Activated T-helper 1 cell treated with anti-CD3 and anti-CD28 coated beads, Interleukin-12 subunit alpha, Interleukin-12 subunit beta, Interleukin-2, Interleukin-4 antibody, amounts not matched to agents 30 ng/mL and 10 ng/mL and 1 ng/mL, durations not matched to agents 14 hours and 24 hours and 36 hours (primary cell): ENCODE measurements at regions of chr2 and their contacts with region 1.

Region 1: DNA sequence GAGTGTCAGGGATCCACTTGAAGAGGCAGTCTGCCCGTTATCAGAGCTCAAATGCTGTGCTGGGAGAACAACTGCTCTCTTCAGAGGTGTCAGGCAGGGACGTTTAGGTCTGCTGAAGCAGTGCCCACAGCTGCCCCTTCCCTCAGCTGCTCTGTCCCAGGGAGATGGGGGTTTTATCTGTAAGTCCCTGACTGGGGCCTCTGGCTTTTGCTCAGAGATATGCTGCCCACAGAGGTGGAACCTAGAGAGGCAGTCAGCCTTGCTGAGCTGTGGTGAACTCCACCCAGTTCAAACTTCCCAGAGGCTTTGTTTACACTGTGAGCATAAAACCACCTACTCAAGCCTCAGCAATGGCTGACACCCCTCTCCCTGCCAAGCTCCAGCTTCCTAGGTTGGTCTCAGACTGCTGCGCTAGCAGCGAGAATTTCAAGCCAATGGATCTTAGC is 38.1 kb downstream of the PLEK start:
- DNase-seq: no peak
- H3K4me3 Mint-ChIP-seq: no peak overlapping the region
- H3K27ac Mint-ChIP-seq: no peak overlapping the region
- H3K4me1 Mint-ChIP-seq: peaks cover 5% of the 10 kb centered on the region
- H3K27me3 Mint-ChIP-seq: peaks cover 25% of the 10 kb centered on the region

Region 2: GRCh38 chr2:67446491-67446911 is 956.7 kb before region 1 on chr2:
- intact Hi-C with region 1: no loop called
- DNase-seq: no peak
- H3K4me3 Mint-ChIP-seq: no peak overlapping the region
- H3K27ac Mint-ChIP-seq: no peak overlapping the region
- H3K4me1 Mint-ChIP-seq: no peaks in the 10 kb centered on the region
- H3K27me3 Mint-ChIP-seq: no peaks in the 10 kb centered on the region

Region 3: GRCh38 chr2:68362069-68362468 is 41.2 kb before region 1 on chr2:
- intact Hi-C with region 1: loop called (anchors 5 kb)
- DNase-seq: peak; percentile 65
- H3K4me3 Mint-ChIP-seq: peak overlapping the region; percentile 32
- H3K27ac Mint-ChIP-seq: peak overlapping the region; percentile 36
- H3K4me1 Mint-ChIP-seq: peaks cover 26% of the 10 kb centered on the region
- H3K27me3 Mint-ChIP-seq: peaks cover 12% of the 10 kb centered on the region

Region 4: DNA sequence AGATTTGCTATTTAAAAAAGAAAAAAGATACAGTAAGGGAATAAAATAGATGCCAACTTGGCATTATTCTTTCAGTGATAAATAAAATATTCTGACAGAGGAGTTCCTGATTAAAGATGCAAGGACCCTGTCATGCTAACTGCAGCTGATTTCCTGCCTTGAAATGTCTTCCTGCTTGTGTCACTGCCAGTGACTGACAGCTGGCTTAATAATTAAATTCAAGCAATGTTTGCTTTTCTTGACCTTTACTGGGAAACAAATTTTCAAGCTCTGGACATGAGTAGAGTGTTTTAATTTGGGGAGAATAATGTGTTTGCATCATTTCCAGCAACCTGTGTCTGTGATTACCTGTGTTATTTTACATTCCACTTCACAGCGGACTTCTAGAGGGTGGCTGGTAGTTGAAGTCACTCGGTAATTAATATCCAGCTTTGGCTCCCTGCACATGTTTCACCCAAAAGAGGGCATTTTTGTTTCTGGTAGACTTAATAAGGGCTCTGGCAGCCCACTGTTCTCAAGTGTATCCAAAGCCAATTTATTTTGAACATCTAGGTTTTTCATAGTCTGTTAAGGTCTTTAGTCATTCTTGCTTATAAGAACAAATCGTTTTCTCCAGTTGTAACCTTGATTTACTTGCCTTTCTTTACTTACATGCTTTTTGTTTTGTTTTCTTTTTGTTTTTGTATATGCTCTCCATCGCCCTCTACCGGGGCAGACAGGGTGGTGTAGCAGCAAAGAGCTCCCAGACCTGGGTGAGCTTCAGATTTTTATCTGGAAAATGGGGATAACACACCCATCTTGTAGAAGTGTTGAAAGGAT is 191.7 kb after region 1 on chr2:
- intact Hi-C with region 1: no loop called
- DNase-seq: peak; percentile 35
- H3K4me3 Mint-ChIP-seq: no peak overlapping the region
- H3K27ac Mint-ChIP-seq: no peak overlapping the region
- H3K4me1 Mint-ChIP-seq: peaks cover 8% of the 10 kb centered on the region
- H3K27me3 Mint-ChIP-seq: peaks cover 6% of the 10 kb centered on the region